Ascending aorta (tissue), 2 donors: ENCODE measurements at regions of chr18 and their contacts with region 1.

Region 1: DNA sequence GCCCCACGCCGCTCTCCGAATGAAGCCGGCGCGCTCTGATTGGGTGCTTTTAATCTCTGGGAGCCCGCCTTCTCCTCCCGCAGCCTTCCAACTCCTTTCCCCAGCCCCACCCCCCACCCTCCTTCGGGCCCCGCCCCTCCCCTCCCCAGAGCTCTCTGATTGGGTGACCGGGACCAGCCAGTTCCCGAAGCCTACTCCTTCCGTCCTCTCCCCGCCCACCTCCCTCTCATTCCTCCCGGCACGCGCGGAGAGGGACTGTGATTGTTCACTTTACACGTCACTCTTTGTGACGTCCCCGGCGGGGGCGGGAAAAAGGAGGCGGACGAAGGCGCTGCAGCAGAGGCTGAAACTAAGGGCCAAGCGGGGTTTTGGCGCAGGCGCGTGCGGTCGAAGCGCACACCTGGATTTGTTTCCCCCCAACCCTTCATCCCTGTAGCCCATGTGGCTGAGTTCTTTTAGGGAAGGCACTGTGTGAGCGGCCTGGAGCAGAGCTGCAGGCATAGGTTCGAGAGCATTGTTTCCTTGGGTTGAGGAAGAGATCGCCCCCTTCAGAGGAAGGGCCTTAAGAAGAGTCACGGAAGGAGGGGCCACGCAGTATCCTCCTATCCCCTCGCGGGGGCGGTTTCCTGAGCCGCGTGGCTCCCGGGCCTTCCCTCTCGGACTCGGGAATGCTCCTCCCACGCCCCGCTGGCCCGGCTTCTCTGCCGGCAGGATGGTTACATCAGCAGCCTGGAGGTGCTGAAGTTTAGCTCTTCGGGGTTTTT is at the start of gene MEX3C:
- DNase-seq: peak; percentile 98 to 100
- H3K4me3 ChIP-seq: peak within 1 kb of the TSS; percentile 81 to 82
- H3K27ac ChIP-seq: peak within 1 kb of the TSS; percentile 97 to 98
- H3K4me1 ChIP-seq: peaks cover 0 to 19% of the 10 kb centered on the region in 2 donors
- H3K27me3 ChIP-seq: no peaks in the 10 kb centered on the region
- CTCF ChIP-seq: peak in 2 of 3 experiments; percentile 29
- total RNA-seq, gene MEX3C: 97.7 TPM

Region 2: DNA sequence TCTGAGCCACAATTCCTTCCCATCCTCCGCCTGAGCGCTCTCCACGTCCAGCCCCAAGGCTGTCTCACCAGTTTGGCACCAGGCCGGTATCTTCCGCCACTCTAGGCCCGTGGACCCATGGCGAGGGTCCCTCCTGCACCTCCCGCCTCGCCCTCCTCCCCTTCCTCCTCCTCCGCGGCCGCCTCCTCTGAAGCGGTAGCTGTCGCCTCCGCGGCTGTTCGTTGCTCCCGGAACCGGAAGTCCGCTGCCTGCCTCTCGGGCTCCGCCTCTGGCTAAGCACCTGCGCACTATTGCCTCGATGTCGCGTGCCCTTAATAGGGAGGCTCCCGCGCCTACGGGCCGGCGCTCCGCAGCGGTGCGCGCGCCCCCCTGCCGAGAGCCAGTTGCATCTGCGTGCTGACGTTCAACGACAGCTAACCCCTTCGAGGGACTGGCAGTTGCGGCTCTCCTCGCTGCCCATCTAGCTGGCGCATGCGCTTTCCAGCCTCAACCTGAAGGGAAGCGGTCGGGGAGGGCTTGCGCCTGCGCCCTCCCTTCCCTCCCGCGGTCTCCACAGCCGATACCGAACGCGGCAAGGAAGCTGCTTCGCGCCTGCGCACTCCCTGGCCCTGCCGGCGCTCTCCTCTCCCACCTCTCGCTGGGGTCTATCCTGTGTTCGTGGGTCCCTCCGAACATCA is 916.4 kb before region 1 on chr18 and contains the start of gene MBD1:
- intact Hi-C with region 1: loop called (anchors 5 kb)
- DNase-seq: peak; percentile 92 to 98
- H3K4me3 ChIP-seq: peak within 1 kb of the TSS; percentile 71 to 93
- H3K27ac ChIP-seq: peak within 1 kb of the TSS; percentile 92 to 97
- H3K4me1 ChIP-seq: peaks cover 3 to 23% of the 10 kb centered on the region in 2 donors
- H3K27me3 ChIP-seq: no peaks in the 10 kb centered on the region
- CTCF ChIP-seq: peak in 2 of 3 experiments; percentile 22 to 38
- total RNA-seq, gene MBD1: 53.4 TPM

Region 3: GRCh38 chr18:50819728-50820378 is 378.0 kb before region 1 on chr18 and contains the start of gene MRO:
- intact Hi-C with region 1: loop called (anchors 5 kb)
- DNase-seq: peak; percentile 49 to 88
- H3K4me3 ChIP-seq: peak within 1 kb of the TSS; percentile 42 to 55
- H3K27ac ChIP-seq: no peak within 1 kb of the TSS
- H3K4me1 ChIP-seq: peaks cover 0 to 6% of the 10 kb centered on the region in 2 donors
- H3K27me3 ChIP-seq: no peaks in the 10 kb centered on the region
- CTCF ChIP-seq: peak; percentile 82 to 94 (median 85)
- total RNA-seq, gene MRO: 1.4 TPM

Region 4: GRCh38 chr18:50967714-50968661 is 229.9 kb before region 1 on chr18 and contains the start of gene ELAC1:
- intact Hi-C with region 1: loop called (anchors 2 kb)
- DNase-seq: peak; percentile 10 to 87
- H3K4me3 ChIP-seq: peak within 1 kb of the TSS; percentile 87 to 89
- H3K27ac ChIP-seq: peak within 1 kb of the TSS; percentile 96 to 98
- H3K4me1 ChIP-seq: peaks cover 0 to 7% of the 10 kb centered on the region in 2 donors
- H3K27me3 ChIP-seq: no peaks in the 10 kb centered on the region
- CTCF ChIP-seq: no peak
- total RNA-seq, gene ELAC1: not detected

Region 5: DNA sequence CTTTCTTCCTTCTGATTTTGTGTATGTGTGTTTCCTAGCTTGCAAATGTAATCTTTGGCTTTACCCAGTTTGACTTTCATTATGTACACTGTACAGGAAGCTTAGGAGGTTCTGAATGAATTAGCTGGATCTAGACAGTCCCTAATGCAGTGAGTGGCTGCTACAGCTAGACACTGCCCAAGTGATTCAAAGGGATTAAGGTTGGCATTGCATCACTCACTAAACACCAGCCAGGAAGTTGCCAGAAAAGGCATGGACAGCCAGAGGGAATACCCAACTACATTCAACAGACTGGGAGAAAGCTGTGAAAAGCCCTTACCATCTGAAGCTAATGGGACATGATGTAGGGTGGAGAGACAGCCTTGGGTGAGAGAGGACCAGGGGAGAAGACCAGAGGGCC is 315.7 kb after region 1 on chr18:
- intact Hi-C with region 1: no loop called
- DNase-seq: no peak
- H3K4me3 ChIP-seq: no peak overlapping the region
- H3K27ac ChIP-seq: no peak overlapping the region
- H3K4me1 ChIP-seq: no peaks in the 10 kb centered on the region
- H3K27me3 ChIP-seq: no peaks in the 10 kb centered on the region
- CTCF ChIP-seq: no peak